GM10248 (cell line): ENCODE measurements at regions of chr5 and their contacts with region 1.

Region 1: GRCh38 chr5:150778517-150779396 is at the start of gene SMIM3:
- DNase-seq: peak; percentile 69
- CTCF ChIP-seq: peak; percentile 85

Region 2: DNA sequence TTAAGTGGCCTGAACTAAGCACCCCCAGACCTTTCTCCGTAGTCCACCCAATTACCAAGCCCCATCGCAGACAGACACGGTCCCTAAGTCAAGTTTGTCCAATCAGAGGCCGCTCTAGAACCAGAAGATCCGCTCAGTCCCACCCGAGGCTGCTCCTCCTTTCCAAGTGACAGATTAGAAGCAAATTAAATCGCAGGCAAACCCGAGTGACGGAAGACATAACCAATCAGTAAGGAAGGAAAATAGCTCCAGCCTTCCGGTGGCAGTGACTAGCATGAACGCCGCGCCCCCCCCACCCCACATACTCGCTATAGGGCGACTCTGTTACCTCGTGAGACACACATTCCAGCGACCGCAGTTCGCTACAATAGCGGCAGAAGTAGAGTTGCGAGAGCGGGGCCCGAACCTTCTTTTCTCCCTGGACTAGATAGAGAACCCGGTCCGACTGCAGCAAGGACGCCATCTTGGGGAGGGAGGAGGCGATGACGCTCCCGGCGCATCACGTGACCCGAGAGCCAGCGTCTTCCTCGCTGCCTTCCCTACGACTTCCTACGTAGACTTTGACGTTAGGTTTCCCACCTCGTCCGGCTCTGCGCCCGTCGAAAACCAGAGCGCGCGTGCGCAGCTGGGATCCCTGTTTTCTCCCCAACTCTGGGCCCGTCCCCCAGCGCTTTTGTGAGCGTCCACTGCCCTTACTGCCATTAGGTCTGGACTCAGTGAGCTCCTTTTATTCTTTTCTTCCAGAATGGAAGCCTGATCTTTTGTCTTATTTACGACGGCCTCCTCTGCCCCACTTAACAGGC is 20.0 kb before region 1 on chr5 and contains the start of gene DCTN4:
- CTCF ChIA-PET with region 1: interaction called, 131 read pairs
- POLR2A ChIA-PET with region 1: interaction called, 6 read pairs
- DNase-seq: peak; percentile 92
- CTCF ChIP-seq: no peak

Region 3: GRCh38 chr5:150789943-150790611 is 11.3 kb after region 1 on chr5:
- CTCF ChIA-PET with region 1: interaction called, 21 read pairs
- POLR2A ChIA-PET with region 1: interaction called, 3 read pairs
- DNase-seq: peak; percentile 70
- CTCF ChIP-seq: no peak